Activated CD4-positive, alpha-beta T cell treated with anti-CD3 and anti-CD28 coated beads, Interleukin-2, amount 10 ng/mL, durations not matched to agents 24 days and 14 days (primary cell): ENCODE measurements at regions of chr7 and their contacts with region 1.

Region 1: GRCh38 chr7:99325545-99326407 is at the start of gene ARPC1A:
- DNase-seq: peak; percentile 98
- H3K4me3 Mint-ChIP-seq: peak within 1 kb of the TSS; percentile 91
- H3K27ac Mint-ChIP-seq: peak within 1 kb of the TSS; percentile 90
- H3K4me1 Mint-ChIP-seq: peaks cover 35% of the 10 kb centered on the region
- H3K27me3 Mint-ChIP-seq: peaks cover 3% of the 10 kb centered on the region
- total RNA-seq, gene ARPC1A: 76.0 and 80.8 TPM in 2 replicates

Region 2: DNA sequence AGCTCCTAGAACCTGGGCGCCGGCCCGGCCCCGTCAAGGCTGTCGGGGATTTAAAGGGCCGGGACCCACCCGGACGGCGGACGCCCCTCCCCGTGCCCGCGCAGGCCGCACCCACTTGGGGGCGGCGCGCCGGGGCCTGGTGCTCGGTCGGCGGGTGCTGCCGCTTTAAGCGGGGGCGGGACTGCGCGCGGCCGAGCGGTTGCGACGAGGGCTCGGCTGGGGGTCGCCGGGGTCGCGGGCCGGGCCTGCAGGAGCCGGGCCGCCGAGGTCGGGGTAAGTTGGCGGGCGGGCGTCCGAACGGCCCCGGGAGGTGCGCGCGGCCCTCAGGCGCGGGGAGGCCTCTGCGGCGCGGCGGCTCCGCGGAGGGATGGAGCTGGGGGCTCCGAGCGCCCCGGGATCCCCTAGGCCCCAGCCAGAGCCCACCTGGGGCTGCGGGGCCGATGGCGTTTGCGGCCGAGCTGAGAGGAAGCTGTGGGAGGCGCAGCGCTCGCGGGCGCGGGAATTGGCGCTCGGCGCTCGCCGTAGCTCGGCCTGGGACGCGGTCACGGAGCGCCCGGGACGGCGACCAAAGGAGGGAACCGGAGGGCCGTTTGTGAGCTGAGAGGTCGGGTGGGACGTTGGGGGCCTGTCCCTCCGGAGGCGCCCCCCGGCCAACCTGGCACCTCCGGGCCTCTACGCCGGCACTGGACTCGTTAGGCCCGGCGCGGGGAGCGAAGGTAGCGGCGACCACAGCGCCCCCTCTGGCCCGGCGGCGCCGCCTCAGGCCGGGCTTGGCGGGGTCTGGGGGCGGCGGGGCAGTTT is 447.2 kb before region 1 on chr7 and contains the start of gene TRRAP:
- intact Hi-C with region 1: loop called (anchors 2 kb)
- DNase-seq: peak; percentile 92
- H3K4me3 Mint-ChIP-seq: peak within 1 kb of the TSS; percentile 93
- H3K27ac Mint-ChIP-seq: peak within 1 kb of the TSS; percentile 94
- H3K4me1 Mint-ChIP-seq: peaks cover 24% of the 10 kb centered on the region
- H3K27me3 Mint-ChIP-seq: peaks cover 6% of the 10 kb centered on the region
- total RNA-seq, gene TRRAP: 62.7 and 65.1 TPM in 2 replicates

Region 3: GRCh38 chr7:99184532-99185218 is 141.1 kb before region 1 on chr7:
- intact Hi-C with region 1: no loop called
- DNase-seq: no peak
- H3K4me3 Mint-ChIP-seq: no peak overlapping the region
- H3K27ac Mint-ChIP-seq: no peak overlapping the region
- H3K4me1 Mint-ChIP-seq: no peaks in the 10 kb centered on the region
- H3K27me3 Mint-ChIP-seq: peaks cover 4% of the 10 kb centered on the region

Region 4: DNA sequence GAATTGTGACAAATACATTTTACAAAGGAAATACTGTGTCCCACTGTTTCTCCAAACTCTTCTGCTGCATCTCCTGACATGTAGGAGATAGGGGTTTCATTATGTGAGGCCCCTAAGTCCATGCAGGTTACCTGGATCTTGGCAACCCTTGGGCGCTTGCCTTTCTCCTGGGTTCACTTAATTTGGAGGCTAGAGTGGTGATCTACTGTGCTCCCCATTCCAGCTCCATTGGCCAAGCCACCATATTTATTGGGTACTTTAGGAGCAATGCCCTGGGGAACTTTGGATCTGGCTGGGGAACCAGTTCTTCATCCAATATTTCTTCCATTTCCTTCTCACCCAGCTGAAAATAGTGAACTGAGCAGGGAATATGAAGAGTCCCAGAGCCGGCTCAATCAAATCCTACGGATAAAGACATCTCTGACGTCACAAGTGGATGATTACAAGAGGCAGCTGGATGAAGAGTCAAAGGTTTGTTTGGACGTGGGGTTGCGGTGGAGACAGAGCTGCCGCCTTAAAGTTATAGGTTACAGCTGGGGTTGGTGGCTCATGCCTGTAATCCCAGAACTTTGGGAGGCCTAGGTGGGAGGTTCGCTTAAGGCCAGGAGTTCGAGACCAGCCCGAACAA is 34.7 kb before region 1 on chr7:
- intact Hi-C with region 1: no loop called
- DNase-seq: no peak
- H3K4me3 Mint-ChIP-seq: no peak overlapping the region
- H3K27ac Mint-ChIP-seq: no peak overlapping the region
- H3K4me1 Mint-ChIP-seq: no peaks in the 10 kb centered on the region
- H3K27me3 Mint-ChIP-seq: no peaks in the 10 kb centered on the region

Region 5: DNA sequence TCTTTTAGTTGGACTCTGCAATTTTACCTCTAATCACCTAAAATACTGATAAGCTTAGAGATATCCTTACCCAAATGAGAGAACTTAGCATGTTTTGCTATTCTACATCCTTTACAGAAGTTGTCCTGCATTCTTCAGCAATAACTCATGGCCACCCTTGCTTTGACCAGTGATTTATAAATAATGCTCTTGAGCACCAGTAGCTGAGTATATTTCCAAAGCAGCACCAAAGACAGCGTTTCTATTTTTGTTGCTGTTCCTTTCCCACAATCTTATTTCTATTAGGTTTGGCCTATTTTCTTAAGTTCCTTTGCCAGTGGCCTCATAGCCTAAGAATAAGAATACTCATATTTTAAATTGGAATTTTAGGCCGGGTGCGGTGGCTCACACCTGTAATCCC is 14.9 kb after region 1 on chr7:
- intact Hi-C with region 1: no loop called
- DNase-seq: no peak
- H3K4me3 Mint-ChIP-seq: no peak overlapping the region
- H3K27ac Mint-ChIP-seq: no peak overlapping the region
- H3K4me1 Mint-ChIP-seq: no peaks in the 10 kb centered on the region
- H3K27me3 Mint-ChIP-seq: no peaks in the 10 kb centered on the region

Region 6: GRCh38 chr7:99707096-99707495 is 381.3 kb after region 1 on chr7:
- intact Hi-C with region 1: no loop called
- DNase-seq: no peak
- H3K4me3 Mint-ChIP-seq: no peak overlapping the region
- H3K27ac Mint-ChIP-seq: no peak overlapping the region
- H3K4me1 Mint-ChIP-seq: no peaks in the 10 kb centered on the region
- H3K27me3 Mint-ChIP-seq: no peaks in the 10 kb centered on the region